Heart left ventricle (tissue), 16 donors: ENCODE measurements at regions of chr4 and their contacts with region 1.

Region 1: DNA sequence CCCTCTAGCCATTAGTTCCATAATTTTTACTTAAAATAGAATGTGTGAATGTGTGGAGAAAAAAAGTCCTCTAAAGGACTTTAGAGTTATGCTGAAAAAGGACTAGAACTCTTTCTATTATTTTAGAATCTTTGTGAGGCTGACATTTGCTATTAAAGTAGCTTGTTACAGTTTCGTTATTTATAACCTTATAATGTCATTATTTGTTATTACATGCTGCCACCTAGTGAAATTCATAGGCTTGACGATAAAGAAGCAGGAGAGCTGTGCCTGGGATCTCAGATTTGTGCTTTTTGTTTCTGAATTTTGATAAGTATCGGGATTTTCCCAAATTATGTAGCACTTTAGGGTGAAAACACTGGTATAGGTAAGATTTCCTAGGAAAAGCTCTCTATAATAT is 38.5 kb upstream of the TAPT1 start:
- DNase-seq: no peak
- ATAC-seq: peak; percentile 35 to 83 (median 58)
- H3K4me3 ChIP-seq: no peak overlapping the region
- H3K27ac ChIP-seq: no peak overlapping the region
- H3K4me1 ChIP-seq: peaks cover 0 to 13% (median 1%) of the 10 kb centered on the region in 12 donors
- H3K27me3 ChIP-seq: no peaks in the 10 kb centered on the region
- CTCF ChIP-seq: peak; percentile 36 to 79 (median 70)
- POLR2A ChIP-seq: no peak

Region 2: DNA sequence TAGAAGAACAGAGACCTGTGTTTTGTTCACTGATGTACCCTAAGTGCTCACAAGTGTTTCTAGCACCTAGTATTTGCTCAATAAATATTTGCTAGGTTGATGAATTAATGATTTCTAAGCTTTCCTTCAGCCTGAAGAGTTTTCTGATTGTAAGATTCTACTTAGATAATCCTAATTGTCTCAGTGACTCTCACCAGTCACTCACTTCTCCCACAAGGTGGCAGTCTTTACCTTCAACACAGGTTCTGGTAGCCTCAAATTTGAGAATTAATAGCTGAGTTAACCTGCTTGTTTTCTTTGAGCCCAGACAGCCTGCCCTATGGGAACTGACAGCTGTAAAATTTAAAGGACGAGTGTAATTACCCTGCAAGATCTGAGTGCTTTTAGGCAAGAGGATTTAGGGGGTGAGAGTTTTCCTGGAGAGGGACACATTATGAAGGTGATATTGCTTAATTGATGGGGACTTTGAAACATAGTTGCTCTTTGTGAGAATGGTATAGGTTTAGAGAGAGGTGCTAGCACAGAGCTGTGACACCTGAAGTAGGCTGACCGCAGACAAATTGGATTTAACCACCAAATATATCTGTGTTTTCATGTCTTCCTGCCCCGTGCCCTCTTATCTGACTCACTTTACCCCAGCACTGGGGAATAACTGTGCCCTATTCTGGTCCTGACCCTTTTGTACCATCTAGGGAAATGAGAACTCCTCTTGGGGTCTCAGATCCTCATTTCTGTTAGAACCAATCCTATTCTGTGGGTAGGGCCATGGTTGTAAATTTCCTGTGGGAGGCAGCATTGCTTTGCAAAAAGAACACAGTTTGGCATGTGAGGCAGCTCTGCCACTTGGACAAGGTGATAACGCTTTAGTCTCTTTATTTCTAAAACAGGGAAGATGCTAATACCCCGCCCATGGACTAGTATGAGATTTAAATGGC is 458.9 kb before region 1 on chr4:
- intact Hi-C with region 1: loop called in 2 of 10 experiments (anchors 10 kb)
- DNase-seq: no peak
- ATAC-seq: peak in 3 of 4 donors; percentile 20 to 79 (median 64)
- H3K4me3 ChIP-seq: no peak overlapping the region
- H3K27ac ChIP-seq: no peak overlapping the region
- H3K4me1 ChIP-seq: peaks cover 0 to 34% (median 0%) of the 10 kb centered on the region in 12 donors
- H3K27me3 ChIP-seq: no peaks in the 10 kb centered on the region
- CTCF ChIP-seq: peak; percentile 58 to 75 (median 68)
- POLR2A ChIP-seq: no peak

Region 3: GRCh38 chr4:15873117-15873516 is 391.7 kb before region 1 on chr4:
- intact Hi-C with region 1: loop called in 1 of 10 experiments (anchors 10 kb)
- DNase-seq: peak in 1 of 5 donors; percentile 22
- ATAC-seq: no peak
- H3K4me3 ChIP-seq: no peak overlapping the region
- H3K27ac ChIP-seq: peak overlapping the region in 4 of 12 donors; percentile 17 to 75 (median 32)
- H3K4me1 ChIP-seq: peaks cover 0 to 5% (median 0%) of the 10 kb centered on the region in 12 donors
- H3K27me3 ChIP-seq: no peaks in the 10 kb centered on the region
- CTCF ChIP-seq: no peak
- POLR2A ChIP-seq: no peak

Region 4: GRCh38 chr4:16026160-16026761 is 238.5 kb before region 1 on chr4:
- intact Hi-C with region 1: loop called (anchors 1 to 5 kb)
- DNase-seq: no peak
- ATAC-seq: peak in 1 of 4 donors; percentile 38
- H3K4me3 ChIP-seq: no peak overlapping the region
- H3K27ac ChIP-seq: peak overlapping the region in 1 of 12 donors; percentile 9
- H3K4me1 ChIP-seq: peaks cover 0 to 34% (median 7%) of the 10 kb centered on the region in 12 donors
- H3K27me3 ChIP-seq: no peaks in the 10 kb centered on the region
- CTCF ChIP-seq: peak; percentile 76 to 94 (median 85)
- POLR2A ChIP-seq: no peak

Region 5: GRCh38 chr4:16204505-16204904 is 60.3 kb before region 1 on chr4:
- intact Hi-C with region 1: loop called (anchors 5 to 10 kb)
- DNase-seq: no peak
- ATAC-seq: peak in 3 of 4 donors; percentile 48 to 60 (median 50)
- H3K4me3 ChIP-seq: no peak overlapping the region
- H3K27ac ChIP-seq: peak overlapping the region in 1 of 12 donors; percentile 21
- H3K4me1 ChIP-seq: peaks cover 0 to 47% (median 6%) of the 10 kb centered on the region in 12 donors
- H3K27me3 ChIP-seq: no peaks in the 10 kb centered on the region
- CTCF ChIP-seq: no peak
- POLR2A ChIP-seq: no peak